Posterior cingulate gyrus (tissue), 11 donors: ENCODE measurements at regions of chr11 and their contacts with region 1.

Region 1: GRCh38 chr11:122628810-122629555 is 26.5 kb upstream of the UBASH3B start:
- DNase-seq: peak; percentile 42 to 96 (median 75)

Region 2: GRCh38 chr11:122578168-122578825 is 50.7 kb before region 1 on chr11:
- intact Hi-C with region 1: loop called (anchors 2 kb)
- DNase-seq: no peak

Region 3: DNA sequence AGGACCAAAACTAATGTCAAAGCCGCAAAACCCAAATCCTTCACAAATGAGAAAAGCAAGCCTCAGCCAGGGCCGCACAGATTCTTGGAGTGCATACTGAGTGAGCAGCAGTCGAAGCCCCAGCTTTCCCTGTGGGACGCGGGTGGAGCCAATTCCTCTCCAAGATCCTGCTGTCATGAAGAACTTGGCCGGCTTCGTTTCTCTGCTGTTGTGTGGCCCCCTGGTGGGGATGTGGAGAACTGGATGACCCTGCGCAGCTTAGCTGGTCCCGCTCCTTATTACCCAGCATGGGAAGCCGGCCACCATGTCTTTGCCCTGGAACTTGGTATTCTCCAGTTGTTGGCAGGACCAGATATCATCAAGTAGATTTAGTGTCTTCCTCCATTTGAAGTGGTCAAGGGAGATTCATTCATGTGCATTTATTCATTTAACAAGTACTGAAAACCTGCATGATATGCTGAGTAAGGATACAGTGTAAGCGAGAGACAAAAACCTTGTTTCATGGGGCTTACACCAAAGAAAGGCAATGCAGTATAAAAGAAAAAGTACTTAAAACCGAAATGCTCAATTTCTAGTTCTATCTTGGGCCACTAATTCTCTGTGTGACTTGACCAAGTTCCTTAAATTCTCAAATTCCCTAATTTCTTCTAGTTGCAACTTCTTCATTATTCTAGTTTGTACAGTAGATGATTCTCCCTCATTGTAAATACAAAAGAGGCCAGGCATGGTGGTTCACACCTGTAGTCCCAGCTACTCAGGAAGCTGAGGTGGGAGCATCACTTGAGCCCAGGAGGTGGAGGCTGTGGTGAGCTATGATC is 152.6 kb after region 1 on chr11:
- intact Hi-C with region 1: loop called (anchors 1 kb)
- DNase-seq: peak; percentile 73 to 98 (median 89)

Region 4: GRCh38 chr11:122853971-122854446 is 225.0 kb after region 1 on chr11:
- intact Hi-C with region 1: loop called (anchors 2 kb)
- DNase-seq: peak in 2 of 10 donors; percentile 23 to 26